CD4-positive, alpha-beta memory T cell (primary cell): ENCODE measurements at regions of chr7 and their contacts with region 1.

Region 1: DNA sequence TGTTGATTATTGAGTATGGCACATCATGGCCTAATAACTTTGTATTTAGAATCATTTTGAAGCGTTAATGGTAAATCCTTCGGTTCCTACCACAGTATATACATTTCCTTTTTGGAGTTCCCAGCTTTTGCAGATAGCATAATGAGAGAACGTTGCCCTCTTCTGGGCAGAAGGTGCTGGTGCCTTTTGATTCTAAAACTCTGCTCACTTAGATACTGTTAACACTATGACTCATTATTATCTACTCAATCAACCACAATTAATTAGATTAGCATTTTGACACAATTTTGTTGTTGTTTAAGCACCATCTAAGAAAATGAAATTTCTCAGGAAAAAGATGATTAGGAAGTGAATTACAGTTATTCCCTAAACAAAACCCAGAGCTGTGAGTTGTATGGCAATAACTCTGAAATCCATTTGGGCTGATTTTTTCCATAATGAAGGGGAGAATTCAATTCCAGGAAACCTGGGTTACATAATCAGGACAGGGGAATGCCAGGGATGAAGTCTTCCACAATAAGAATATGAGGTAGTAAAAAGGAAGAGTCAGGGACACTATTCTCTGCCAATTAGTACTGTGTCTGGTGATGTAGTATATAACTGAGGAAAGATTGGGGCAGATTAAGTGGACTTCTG is 11.5 kb upstream of the DLD start:
- DNase-seq: peak; percentile 53 to 68 (median 57)
- H3K4me3 ChIP-seq: no peak overlapping the region
- H3K4me3 Mint-ChIP-seq: no peak overlapping the region
- H3K27ac ChIP-seq: no peak overlapping the region
- H3K27ac Mint-ChIP-seq: peak overlapping the region in 2 of 7 donors; percentile 4 to 52
- H3K4me1 ChIP-seq: peaks cover 18% of the 10 kb centered on the region
- H3K4me1 Mint-ChIP-seq: peaks cover 13 to 26% (median 21%) of the 10 kb centered on the region in 4 donors
- H3K27me3 ChIP-seq: no peaks in the 10 kb centered on the region
- H3K27me3 Mint-ChIP-seq: peaks cover 3 to 6% of the 10 kb centered on the region in 2 donors

Region 2: DNA sequence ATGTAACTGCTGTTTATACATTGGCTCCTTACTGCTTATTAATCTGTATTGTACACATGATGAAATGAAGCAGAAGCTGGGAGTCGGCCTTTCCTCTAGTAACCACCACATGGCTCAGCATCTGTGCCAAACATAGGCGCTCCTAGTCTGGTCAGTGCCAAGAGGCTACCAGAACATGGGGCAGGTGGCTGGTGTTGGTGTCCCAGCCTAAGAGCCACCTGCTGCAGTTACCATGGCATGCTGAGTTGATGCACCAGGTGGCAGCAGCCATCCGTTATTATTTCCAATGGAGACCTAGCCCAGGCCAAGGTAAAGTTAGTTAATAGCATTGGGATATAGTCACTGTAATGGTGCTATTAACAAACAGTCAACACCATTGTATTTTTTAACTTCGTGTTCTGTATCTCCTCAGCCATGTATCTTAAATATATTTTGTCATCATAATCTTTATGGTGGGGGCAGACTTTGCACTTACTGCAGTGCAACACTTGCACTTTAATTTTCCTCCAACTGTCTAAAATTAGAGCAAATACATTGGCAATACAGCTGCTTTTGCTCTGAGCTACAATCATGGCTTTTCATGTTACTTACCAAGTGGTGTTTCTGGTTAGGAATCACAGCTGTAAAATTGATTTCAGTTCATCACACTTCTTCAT is 677.6 kb before region 1 on chr7:
- CTCF ChIA-PET with region 1: interaction called, 5 read pairs
- POLR2A ChIA-PET with region 1: no interaction called
- intact Hi-C with region 1: loop called (anchors 5 kb)
- DNase-seq: peak in 4 of 5 donors; percentile 19 to 26 (median 22)
- H3K4me3 ChIP-seq: no peak overlapping the region
- H3K4me3 Mint-ChIP-seq: no peak overlapping the region
- H3K27ac ChIP-seq: no peak overlapping the region
- H3K27ac Mint-ChIP-seq: peak overlapping the region in 2 of 7 donors; percentile 63 to 79
- H3K4me1 ChIP-seq: no peaks in the 10 kb centered on the region
- H3K4me1 Mint-ChIP-seq: peaks cover 0 to 3% (median 1%) of the 10 kb centered on the region in 4 donors
- H3K27me3 ChIP-seq: no peaks in the 10 kb centered on the region
- H3K27me3 Mint-ChIP-seq: no peaks in the 10 kb centered on the region

Region 3: GRCh38 chr7:107563775-107564552 is 315.6 kb before region 1 on chr7 and contains the starts of genes COG5 and DUS4L:
- CTCF ChIA-PET with region 1: interaction called, 7 read pairs
- POLR2A ChIA-PET with region 1: interaction called, 3 read pairs
- intact Hi-C with region 1: loop called (anchors 1 kb)
- DNase-seq: peak; percentile 83 to 86 (median 85)
- H3K4me3 ChIP-seq: peak within 1 kb of the TSS; percentile 76 to 85
- H3K4me3 Mint-ChIP-seq: peak within 1 kb of the TSS; percentile 85 to 95 (median 90)
- H3K27ac ChIP-seq: peak within 1 kb of the TSS; percentile 97
- H3K27ac Mint-ChIP-seq: peak within 1 kb of the TSS; percentile 92 to 99 (median 97)
- H3K4me1 ChIP-seq: peaks cover 56% of the 10 kb centered on the region
- H3K4me1 Mint-ChIP-seq: peaks cover 50 to 66% (median 58%) of the 10 kb centered on the region in 4 donors
- H3K27me3 ChIP-seq: no peaks in the 10 kb centered on the region
- H3K27me3 Mint-ChIP-seq: no peaks in the 10 kb centered on the region
- total RNA-seq, gene COG5: 85.0 to 87.8 TPM
- total RNA-seq, gene DUS4L: 10.9 to 11.3 TPM

Region 4: DNA sequence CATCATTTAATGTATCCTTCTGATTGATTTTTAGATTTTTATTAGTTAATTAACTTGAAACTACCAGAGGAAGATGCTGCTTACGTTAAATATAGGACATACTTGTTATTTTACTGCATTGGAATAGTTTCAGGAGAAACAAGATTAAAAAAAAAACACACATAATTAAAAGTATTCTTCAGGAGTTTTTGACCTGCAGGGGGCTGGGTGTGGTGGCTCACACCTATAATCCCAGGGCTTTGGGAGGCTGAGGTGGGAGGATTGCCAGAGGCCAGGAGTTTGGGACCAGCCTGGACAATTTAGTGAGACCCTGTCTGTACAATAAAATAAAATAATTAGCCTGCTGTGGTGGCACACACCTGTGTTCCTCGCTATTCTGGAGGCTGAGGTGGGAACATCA is 124.9 kb before region 1 on chr7:
- CTCF ChIA-PET with region 1: interaction called, 12 read pairs
- POLR2A ChIA-PET with region 1: interaction called, 408 read pairs
- intact Hi-C with region 1: no loop called
- DNase-seq: no peak
- H3K4me3 ChIP-seq: no peak overlapping the region
- H3K4me3 Mint-ChIP-seq: no peak overlapping the region
- H3K27ac ChIP-seq: no peak overlapping the region
- H3K27ac Mint-ChIP-seq: peak overlapping the region in 6 of 7 donors; percentile 36 to 75 (median 51)
- H3K4me1 ChIP-seq: peaks cover 21% of the 10 kb centered on the region
- H3K4me1 Mint-ChIP-seq: peaks cover 12 to 46% (median 19%) of the 10 kb centered on the region in 4 donors
- H3K27me3 ChIP-seq: no peaks in the 10 kb centered on the region
- H3K27me3 Mint-ChIP-seq: no peaks in the 10 kb centered on the region

Region 5: GRCh38 chr7:107816011-107816566 is 63.4 kb before region 1 on chr7:
- CTCF ChIA-PET with region 1: no interaction called
- POLR2A ChIA-PET with region 1: no interaction called
- intact Hi-C with region 1: no loop called
- DNase-seq: no peak
- H3K4me3 ChIP-seq: no peak overlapping the region
- H3K4me3 Mint-ChIP-seq: no peak overlapping the region
- H3K27ac ChIP-seq: no peak overlapping the region
- H3K27ac Mint-ChIP-seq: no peak overlapping the region
- H3K4me1 ChIP-seq: no peaks in the 10 kb centered on the region
- H3K4me1 Mint-ChIP-seq: peaks cover 5 to 13% (median 9%) of the 10 kb centered on the region in 4 donors
- H3K27me3 ChIP-seq: no peaks in the 10 kb centered on the region
- H3K27me3 Mint-ChIP-seq: no peaks in the 10 kb centered on the region

Region 6: GRCh38 chr7:107865956-107866775 is 13.4 kb before region 1 on chr7:
- CTCF ChIA-PET with region 1: interaction called, 11 read pairs
- POLR2A ChIA-PET with region 1: interaction called, 3 read pairs
- intact Hi-C with region 1: no loop called
- DNase-seq: no peak
- H3K4me3 ChIP-seq: no peak overlapping the region
- H3K4me3 Mint-ChIP-seq: peak overlapping the region in 6 of 8 donors; percentile 22 to 71 (median 64)
- H3K27ac ChIP-seq: no peak overlapping the region
- H3K27ac Mint-ChIP-seq: peak overlapping the region; percentile 22 to 91 (median 87)
- H3K4me1 ChIP-seq: peaks cover 35% of the 10 kb centered on the region
- H3K4me1 Mint-ChIP-seq: peaks cover 23 to 45% (median 36%) of the 10 kb centered on the region in 4 donors
- H3K27me3 ChIP-seq: no peaks in the 10 kb centered on the region
- H3K27me3 Mint-ChIP-seq: no peaks in the 10 kb centered on the region